ENCODE measurements at regions of chr11 and their contacts with region 1.

Region 1: GRCh38 chr11:119666463-119667131 is 62.4 kb downstream of the NECTIN1 start:
- DNase-seq: peak; percentile 68 to 87 (median 83)
- ATAC-seq: peak; percentile 89
- H3K4me3 ChIP-seq: no peak overlapping the region
- H3K4me1 ChIP-seq: peaks cover 4% of the 10 kb centered on the region
- CTCF ChIP-seq: peak; percentile 74

Region 2: DNA sequence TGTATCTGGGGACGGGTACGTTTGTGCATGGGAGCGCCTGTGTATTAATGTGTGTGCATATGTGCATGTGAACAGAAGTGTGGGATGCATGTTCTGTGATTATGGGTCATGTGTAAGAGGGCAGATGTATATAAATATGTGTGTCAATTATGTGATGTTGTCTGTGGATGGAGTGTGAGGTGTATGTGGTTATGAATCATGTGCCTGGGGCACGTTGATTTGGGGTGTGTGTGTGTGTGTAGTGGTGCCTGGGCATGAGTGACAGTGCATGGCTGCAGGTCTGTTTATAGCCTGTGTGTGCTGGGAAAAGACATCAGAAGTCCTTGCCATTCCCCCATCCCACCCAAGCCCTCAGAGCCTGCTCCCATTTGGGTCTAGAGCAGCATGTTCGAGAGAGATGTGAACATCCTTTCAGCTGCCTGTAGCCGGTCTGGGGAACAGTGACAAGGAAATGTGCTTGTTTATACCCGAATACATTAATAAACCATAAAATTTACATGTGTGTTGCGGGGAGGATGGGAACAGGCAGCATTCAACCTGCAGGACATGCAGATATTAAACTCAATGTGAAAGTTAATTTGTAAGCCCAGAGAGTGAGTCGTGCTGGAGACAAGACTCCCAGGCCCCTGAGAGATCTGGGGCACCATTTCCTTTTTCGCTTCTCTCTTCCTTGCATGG is 66.6 kb before region 1 on chr11:
- intact Hi-C with region 1: loop called in 1 of 2 experiments (anchors 10 kb)
- DNase-seq: no peak
- ATAC-seq: no peak
- H3K4me3 ChIP-seq: no peak overlapping the region
- H3K4me1 ChIP-seq: no peaks in the 10 kb centered on the region
- CTCF ChIP-seq: no peak

Region 3: DNA sequence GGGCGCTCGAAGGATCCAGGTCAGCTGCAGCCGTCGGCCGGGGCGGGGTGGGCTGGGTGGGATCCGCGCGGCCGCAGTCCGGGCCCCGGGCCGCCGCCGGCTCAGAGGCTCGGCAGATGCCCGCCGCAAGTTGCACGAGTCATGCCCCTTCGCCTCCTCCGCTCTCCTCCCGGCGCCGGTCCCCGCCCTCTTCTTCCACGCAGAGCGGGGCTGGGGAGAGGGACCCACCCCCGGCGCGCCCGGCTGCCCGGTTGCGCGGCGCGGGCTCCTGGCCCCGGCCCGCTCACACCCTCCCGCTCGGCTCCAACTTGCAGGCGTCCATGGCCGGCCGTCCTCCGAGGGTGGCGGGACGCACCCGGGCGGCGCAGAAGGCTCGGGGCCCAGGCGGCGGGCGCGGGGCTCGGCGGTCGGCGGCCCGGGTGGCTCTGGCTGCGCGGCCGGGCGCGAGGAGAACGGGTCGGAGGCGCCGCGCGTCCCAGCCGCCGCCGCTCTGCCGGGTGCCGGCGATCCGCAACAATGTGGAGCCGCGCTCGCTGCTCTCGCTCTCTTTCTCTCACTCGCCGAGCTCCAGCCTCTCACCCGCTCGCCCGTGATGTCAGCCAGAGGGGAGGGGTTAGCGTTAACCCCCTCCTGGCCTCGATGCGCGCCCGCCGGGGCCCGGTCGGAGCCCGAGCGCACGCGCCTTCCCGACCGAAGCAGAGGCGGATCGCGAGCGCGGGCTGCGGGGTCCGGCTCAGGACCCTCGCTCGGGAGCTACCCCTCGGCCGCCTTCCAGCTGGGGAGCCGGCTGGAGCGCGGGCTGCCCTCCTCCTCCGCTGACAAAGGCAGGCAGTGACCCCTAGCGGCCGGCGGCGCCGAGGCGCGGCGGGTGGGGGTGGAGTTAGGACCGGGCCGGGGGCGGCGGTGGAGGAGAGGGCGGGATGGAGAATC is 62.3 kb after region 1 on chr11 and contains the start of gene NECTIN1:
- intact Hi-C with region 1: loop called (anchors 5 to 10 kb)
- DNase-seq: peak; percentile 91 to 96 (median 95)
- ATAC-seq: peak; percentile 87
- H3K4me3 ChIP-seq: peak within 1 kb of the TSS; percentile 57
- H3K4me1 ChIP-seq: peaks cover 23% of the 10 kb centered on the region
- CTCF ChIP-seq: peak; percentile 94
- total RNA-seq, gene NECTIN1: 19.6 to 48.9 (median 45.1) TPM

Region 4: DNA sequence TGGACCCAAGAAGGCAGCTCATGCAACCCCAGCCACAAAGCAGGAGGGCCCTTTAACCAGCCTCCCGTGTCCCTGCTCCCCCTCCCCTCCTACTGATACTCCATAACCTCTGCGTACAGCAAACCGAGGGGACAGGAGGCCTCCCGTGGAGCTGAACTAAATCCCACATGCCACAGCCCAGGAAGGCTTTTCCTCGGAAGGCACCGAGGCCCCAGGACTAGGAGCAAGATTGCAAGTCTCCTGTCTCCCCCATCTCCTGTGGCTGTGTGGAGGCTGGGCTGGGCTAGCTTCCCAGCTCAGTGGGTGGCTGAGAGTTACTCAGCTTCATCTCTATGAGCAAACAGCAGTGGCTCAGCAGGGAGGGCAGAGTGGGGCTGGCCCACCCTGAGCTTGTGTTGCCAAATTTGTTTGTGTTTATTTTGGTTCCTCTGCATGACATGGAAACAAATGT is 125.1 kb after region 1 on chr11:
- intact Hi-C with region 1: no loop called
- DNase-seq: peak in 1 of 3 donors; percentile 9
- ATAC-seq: peak; percentile 22
- H3K4me3 ChIP-seq: no peak overlapping the region
- H3K4me1 ChIP-seq: no peaks in the 10 kb centered on the region
- CTCF ChIP-seq: no peak

Region 5: GRCh38 chr11:120108154-120108865 is 441.7 kb after region 1 on chr11:
- intact Hi-C with region 1: loop called (anchors 2 to 5 kb)
- DNase-seq: peak in 2 of 3 donors; percentile 80
- ATAC-seq: peak; percentile 91
- H3K4me3 ChIP-seq: no peak overlapping the region
- H3K4me1 ChIP-seq: no peaks in the 10 kb centered on the region
- CTCF ChIP-seq: peak; percentile 97